Activated B cell treated with CpG ODN at 0.5 μM for 24 hours (primary cell): ENCODE measurements at regions of chr2 and their contacts with region 1.

Region 1: DNA sequence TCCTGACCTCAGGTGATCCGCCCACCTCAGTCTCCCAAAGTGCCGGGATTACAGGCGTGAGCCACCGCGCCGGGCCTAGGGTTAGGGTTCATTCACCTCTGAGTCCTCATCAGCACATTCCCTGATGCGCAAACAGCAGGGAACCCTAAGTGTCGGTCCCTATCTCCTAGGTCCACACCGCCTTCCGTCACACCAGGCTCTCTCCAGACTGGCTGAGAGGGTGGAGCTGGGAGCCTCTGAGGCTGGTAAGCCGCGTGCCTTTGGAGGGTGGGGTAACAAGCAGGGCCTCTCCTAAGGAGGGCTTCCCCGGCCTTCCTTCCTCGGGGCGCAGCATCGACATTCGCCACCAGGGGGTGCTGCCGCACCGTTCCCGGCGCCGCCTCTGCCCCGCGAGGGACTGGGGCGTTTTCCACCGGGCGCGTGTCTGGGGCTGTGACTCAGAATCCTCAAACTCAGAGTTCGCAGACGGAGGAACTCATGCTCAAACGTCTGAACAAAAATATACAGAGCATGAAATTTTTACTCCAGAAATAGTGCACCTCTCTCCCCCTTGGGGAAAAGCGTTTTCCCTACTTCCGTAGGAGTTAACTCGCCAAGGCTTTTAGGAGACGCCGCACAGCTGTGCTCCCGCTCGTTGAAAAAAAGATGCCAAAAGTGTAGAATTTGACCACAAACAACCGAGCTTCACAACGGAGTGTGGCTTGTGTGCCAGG is 63.9 kb upstream of the ASAP2 start:
- DNase-seq: peak; percentile 74
- ATAC-seq: peak; percentile 91
- H3K4me3 Mint-ChIP-seq: peak overlapping the region; percentile 11
- H3K27ac Mint-ChIP-seq: no peak overlapping the region
- H3K4me1 Mint-ChIP-seq: peaks cover 6% of the 10 kb centered on the region
- H3K27me3 Mint-ChIP-seq: peaks cover 16% of the 10 kb centered on the region
- CTCF ChIP-seq: no peak

Region 2: GRCh38 chr2:9178904-9179571 is 36.3 kb after region 1 on chr2:
- CTCF ChIA-PET with region 1: no interaction called
- POLR2A ChIA-PET with region 1: no interaction called
- intact Hi-C with region 1: no loop called
- DNase-seq: no peak
- ATAC-seq: no peak
- H3K4me3 Mint-ChIP-seq: no peak overlapping the region
- H3K27ac Mint-ChIP-seq: no peak overlapping the region
- H3K4me1 Mint-ChIP-seq: peaks cover 6% of the 10 kb centered on the region
- H3K27me3 Mint-ChIP-seq: peaks cover 4% of the 10 kb centered on the region
- CTCF ChIP-seq: no peak

Region 3: DNA sequence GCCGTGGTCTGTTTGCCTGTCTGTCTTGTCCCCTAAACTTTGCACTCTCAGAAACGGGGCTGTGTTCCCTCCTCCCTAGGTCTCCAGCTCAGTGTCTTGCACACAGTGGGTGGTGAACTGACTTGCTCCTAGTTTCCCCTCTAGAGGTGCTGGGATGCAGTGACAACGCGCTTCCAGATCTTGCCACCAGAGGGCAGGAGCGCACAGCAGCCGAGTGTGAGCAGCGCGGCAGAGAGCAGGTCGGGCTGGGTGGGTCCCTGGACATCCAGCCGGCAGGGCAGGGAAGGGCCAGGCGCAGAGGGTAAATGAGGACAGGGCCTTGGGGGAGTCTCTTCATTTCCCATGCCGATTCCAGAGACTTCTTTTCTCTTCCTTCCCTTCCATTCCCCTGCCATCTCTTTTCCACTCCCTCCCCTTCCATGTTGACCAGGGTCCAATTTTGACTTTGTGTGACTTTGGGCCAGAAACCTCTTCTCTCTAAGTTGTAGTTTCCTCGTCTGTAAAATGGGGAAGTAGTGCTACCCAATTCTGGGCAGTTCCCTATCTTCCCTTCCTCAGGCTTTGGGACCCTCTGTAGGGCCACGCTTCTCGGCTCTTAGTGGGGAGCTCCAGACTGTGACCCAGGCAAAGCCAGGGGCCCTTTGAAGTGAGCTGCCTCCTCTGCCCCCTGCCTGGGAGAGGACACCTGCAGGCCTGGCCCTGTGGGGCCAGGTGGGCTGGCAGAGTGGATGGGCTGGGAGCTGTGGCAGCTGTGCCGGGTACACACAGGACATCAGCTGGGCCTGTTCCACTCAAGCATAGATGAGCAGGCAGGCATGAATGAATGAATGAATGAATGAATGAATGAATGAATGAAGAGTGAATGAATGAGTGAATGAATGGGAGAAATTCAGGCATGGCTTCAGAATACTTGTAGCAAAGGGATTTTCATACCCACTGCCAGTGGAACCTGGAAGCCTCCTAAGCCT is 657.2 kb after region 1 on chr2:
- CTCF ChIA-PET with region 1: no interaction called
- POLR2A ChIA-PET with region 1: no interaction called
- intact Hi-C with region 1: loop called (anchors 1 kb)
- DNase-seq: peak; percentile 82
- ATAC-seq: peak; percentile 97
- H3K4me3 Mint-ChIP-seq: peak overlapping the region; percentile 50
- H3K27ac Mint-ChIP-seq: peak overlapping the region; percentile 42
- H3K4me1 Mint-ChIP-seq: peaks cover 20% of the 10 kb centered on the region
- H3K27me3 Mint-ChIP-seq: peaks cover 3% of the 10 kb centered on the region
- CTCF ChIP-seq: peak; percentile 65